CD8-positive, alpha-beta T cell (primary cell): ENCODE measurements at regions of chr6 and their contacts with region 1.

Region 1: GRCh38 chr6:27672113-27672799 is 199.4 kb upstream of the ZNF184 start:
- DNase-seq: peak in 2 of 9 experiments; percentile 41 to 68
- ATAC-seq: no peak
- H3K4me3 ChIP-seq: no peak overlapping the region
- H3K4me3 Mint-ChIP-seq: peak overlapping the region; percentile 38
- H3K27ac ChIP-seq: no peak overlapping the region
- H3K27ac Mint-ChIP-seq: no peak overlapping the region
- H3K4me1 ChIP-seq: no peaks in the 10 kb centered on the region
- H3K4me1 Mint-ChIP-seq: peaks cover 27% of the 10 kb centered on the region
- H3K27me3 ChIP-seq: peaks cover 60 to 71% of the 10 kb centered on the region in 2 experiments
- H3K27me3 Mint-ChIP-seq: peaks cover 79% of the 10 kb centered on the region
- CTCF ChIP-seq: no peak

Region 2: GRCh38 chr6:27280064-27280539 is 392.2 kb before region 1 on chr6:
- CTCF ChIA-PET with region 1: no interaction called
- POLR2A ChIA-PET with region 1: no interaction called
- intact Hi-C with region 1: loop called in 1 of 2 experiments (anchors 5 kb)
- DNase-seq: no peak
- ATAC-seq: no peak
- H3K4me3 ChIP-seq: no peak overlapping the region
- H3K4me3 Mint-ChIP-seq: no peak overlapping the region
- H3K27ac ChIP-seq: no peak overlapping the region
- H3K27ac Mint-ChIP-seq: no peak overlapping the region
- H3K4me1 ChIP-seq: no peaks in the 10 kb centered on the region
- H3K4me1 Mint-ChIP-seq: peaks cover 2% of the 10 kb centered on the region
- H3K27me3 ChIP-seq: peaks cover 58 to 81% of the 10 kb centered on the region in 2 experiments
- H3K27me3 Mint-ChIP-seq: peaks cover 84% of the 10 kb centered on the region
- CTCF ChIP-seq: no peak

Region 3: DNA sequence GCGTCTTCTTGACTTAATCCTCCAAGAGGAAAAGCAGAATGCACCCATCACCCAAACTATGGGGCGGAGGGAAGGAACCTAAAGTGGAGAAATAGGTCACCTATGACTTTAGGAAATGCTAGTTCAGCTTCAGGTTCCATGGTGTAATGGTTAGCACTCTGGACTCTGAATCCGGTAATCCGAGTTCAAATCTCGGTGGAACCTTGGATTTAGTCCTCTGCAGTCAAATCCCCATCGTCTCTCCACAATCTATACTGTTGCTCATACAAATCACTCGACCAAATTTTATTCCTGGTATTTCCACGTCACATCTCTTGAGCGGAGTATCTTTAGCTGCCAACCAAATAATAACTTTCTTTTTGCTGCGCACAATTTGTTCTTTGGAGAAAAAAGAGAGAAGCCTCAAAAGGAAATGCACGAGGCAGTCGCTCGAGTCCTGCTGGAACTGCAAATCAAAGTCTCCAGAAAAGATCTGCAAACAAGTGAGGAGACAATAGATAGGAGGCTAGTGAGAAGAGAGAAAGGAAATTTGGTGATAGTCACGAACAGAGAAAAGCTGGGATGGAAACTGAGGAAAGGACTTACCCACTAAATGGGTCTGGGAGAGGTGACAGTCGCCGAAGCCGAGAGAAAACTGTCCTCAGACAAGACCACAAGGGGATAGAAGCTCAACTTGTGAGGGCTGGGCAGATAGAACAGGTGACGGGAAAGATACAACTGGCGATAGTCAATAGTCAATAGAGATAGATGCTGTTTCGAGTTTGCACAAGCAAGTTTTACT is 376.8 kb before region 1 on chr6:
- CTCF ChIA-PET with region 1: no interaction called
- POLR2A ChIA-PET with region 1: no interaction called
- intact Hi-C with region 1: loop called (anchors 5 to 10 kb)
- DNase-seq: no peak
- ATAC-seq: no peak
- H3K4me3 ChIP-seq: no peak overlapping the region
- H3K4me3 Mint-ChIP-seq: no peak overlapping the region
- H3K27ac ChIP-seq: no peak overlapping the region
- H3K27ac Mint-ChIP-seq: peak overlapping the region; percentile 6
- H3K4me1 ChIP-seq: no peaks in the 10 kb centered on the region
- H3K4me1 Mint-ChIP-seq: no peaks in the 10 kb centered on the region
- H3K27me3 ChIP-seq: peaks cover 53 to 65% of the 10 kb centered on the region in 2 experiments
- H3K27me3 Mint-ChIP-seq: peaks cover 86% of the 10 kb centered on the region
- CTCF ChIP-seq: no peak

Region 4: DNA sequence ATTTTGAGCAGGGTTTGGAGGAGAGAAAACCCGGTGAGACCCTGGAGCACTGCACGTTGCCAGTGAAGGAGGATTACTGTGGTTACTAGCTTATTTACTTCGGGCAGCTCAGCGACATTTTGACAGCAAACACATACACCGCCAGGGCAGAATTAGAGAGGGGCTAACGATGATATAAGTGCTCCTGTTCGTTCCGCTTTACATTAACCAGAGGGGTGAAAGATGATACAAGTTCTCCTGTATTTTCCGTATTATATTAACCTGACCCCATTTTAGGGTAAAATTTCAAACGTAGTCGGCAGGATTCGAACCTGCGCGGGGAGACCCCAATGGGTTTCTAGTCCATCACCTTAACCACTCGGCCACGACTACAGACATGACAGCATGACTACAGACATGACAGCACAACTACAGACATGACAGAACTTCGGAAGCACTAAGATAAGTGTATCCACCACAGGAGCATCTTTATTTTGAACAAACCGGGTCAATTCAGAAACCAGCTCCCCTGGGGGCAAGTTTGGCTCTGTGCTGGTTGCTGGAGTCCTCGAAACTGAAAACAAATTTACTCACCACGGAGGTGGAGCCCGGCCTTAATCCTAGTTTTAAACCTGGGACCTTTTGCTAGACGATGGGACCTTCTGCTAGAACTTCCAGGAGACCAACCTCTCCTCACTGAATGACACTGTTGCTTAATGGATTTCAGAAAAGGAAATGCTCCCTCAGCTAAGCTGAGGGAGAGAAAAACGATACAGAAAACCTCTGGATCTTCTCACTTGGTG is 118.9 kb before region 1 on chr6:
- CTCF ChIA-PET with region 1: no interaction called
- POLR2A ChIA-PET with region 1: interaction called, 5 read pairs
- intact Hi-C with region 1: loop called in 1 of 2 experiments (anchors 5 kb)
- DNase-seq: peak in 2 of 9 experiments; percentile 17 to 22
- ATAC-seq: no peak
- H3K4me3 ChIP-seq: no peak overlapping the region
- H3K4me3 Mint-ChIP-seq: no peak overlapping the region
- H3K27ac ChIP-seq: no peak overlapping the region
- H3K27ac Mint-ChIP-seq: no peak overlapping the region
- H3K4me1 ChIP-seq: peaks cover 4% of the 10 kb centered on the region
- H3K4me1 Mint-ChIP-seq: peaks cover 3% of the 10 kb centered on the region
- H3K27me3 ChIP-seq: peaks cover 51 to 55% of the 10 kb centered on the region in 2 experiments
- H3K27me3 Mint-ChIP-seq: peaks cover 70% of the 10 kb centered on the region
- CTCF ChIP-seq: no peak

Region 5: DNA sequence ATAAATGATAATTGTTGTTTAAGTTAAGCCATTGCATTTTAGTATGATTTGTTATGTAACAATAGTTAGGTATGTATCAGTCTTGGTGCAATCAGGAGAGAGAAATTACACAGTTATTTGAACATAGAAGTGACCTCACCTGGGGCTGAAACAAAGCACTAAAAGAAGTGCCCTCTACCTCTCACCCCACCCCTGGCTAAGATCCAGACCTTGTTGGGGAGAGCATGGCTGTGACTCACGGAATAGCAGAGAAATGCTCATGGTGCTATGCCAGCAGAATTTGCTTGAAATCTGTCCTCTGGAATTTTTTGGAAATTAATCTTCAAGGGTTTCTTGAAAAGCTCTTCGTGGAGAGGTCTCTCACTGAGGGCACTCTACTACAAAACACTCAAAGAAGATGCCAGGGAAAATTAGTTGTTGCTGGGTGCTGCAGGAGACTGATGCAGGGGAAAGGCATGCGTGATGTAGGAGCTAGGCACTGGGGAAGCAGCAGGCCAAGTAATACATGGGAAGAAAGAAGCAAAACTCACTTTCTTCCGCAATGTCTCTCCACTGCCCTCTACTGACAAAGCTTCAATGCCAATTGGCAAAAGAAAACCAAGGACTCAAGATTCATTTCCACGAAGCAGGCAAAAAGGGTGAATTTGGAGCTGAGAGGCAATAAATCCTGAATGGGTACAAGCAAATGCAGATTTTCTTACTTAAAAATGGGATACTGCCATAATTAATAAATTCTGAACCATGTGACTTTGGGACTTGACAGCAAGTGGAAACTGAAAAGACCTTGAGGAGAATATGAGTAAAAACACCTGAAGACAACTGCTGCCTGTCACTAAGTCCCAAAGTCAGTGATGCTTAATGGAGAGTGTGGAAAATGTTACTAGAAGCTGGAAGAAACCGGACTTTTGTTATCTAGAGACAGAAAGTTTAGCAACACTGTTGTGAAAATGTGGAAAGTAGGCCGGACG is 63.1 kb before region 1 on chr6:
- CTCF ChIA-PET with region 1: no interaction called
- POLR2A ChIA-PET with region 1: no interaction called
- intact Hi-C with region 1: loop called (anchors 5 kb)
- DNase-seq: peak in 2 of 9 experiments; percentile 44 to 58
- ATAC-seq: no peak
- H3K4me3 ChIP-seq: no peak overlapping the region
- H3K4me3 Mint-ChIP-seq: no peak overlapping the region
- H3K27ac ChIP-seq: no peak overlapping the region
- H3K27ac Mint-ChIP-seq: no peak overlapping the region
- H3K4me1 ChIP-seq: no peaks in the 10 kb centered on the region
- H3K4me1 Mint-ChIP-seq: peaks cover 11% of the 10 kb centered on the region
- H3K27me3 ChIP-seq: peaks cover 12 to 18% of the 10 kb centered on the region in 2 experiments
- H3K27me3 Mint-ChIP-seq: peaks cover 47% of the 10 kb centered on the region
- CTCF ChIP-seq: peak; percentile 48

Region 6: DNA sequence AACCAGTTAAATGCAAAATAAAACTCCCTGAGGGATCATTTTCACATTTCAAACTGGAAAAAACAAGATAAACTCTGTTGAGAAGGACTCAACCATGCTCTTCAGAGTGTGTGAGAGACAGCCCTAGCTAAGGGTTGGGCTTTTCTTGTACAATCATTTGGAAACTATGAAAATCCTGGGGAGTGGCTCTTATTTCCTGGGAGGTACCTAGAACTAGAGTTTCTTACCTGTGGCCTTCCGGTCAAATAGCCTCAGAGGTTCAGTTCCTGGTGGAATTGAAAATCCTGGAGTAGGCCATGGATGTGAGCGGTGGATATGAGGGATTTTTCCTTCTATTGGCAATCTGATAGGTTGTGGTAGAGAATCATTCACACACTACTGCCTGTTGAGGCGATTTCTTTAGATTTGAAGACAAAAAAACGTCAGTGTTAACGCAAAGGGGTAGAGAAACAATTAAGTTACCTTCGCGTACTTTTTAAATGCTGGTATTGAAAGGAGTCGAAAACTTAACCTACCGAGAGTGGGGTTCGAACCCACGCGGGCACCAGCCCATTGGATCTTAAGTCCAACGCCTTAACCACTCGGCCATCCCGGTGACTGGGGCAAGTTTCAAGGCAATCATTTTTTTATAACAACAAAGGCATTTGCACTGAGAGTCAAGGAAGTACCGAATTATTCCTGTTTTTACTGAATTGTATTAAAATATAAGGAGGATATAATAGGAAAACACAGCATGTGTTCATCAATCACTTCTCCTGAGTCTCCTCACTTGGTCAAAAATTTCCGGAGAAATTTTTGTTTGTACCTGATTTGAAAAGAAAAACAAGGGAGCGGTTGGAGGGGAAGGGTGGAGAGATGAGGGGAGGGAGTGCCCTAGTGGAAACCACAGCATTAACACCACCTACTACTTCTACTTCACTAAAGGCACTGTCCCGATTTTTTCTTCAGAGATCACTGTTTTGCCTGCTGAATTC is 48.6 kb after region 1 on chr6:
- CTCF ChIA-PET with region 1: no interaction called
- POLR2A ChIA-PET with region 1: no interaction called
- intact Hi-C with region 1: no loop called
- DNase-seq: no peak
- ATAC-seq: no peak
- H3K4me3 ChIP-seq: no peak overlapping the region
- H3K4me3 Mint-ChIP-seq: no peak overlapping the region
- H3K27ac ChIP-seq: no peak overlapping the region
- H3K27ac Mint-ChIP-seq: no peak overlapping the region
- H3K4me1 ChIP-seq: no peaks in the 10 kb centered on the region
- H3K4me1 Mint-ChIP-seq: no peaks in the 10 kb centered on the region
- H3K27me3 ChIP-seq: peaks cover 0 to 16% of the 10 kb centered on the region in 2 experiments
- H3K27me3 Mint-ChIP-seq: peaks cover 41% of the 10 kb centered on the region
- CTCF ChIP-seq: no peak